Transverse colon (tissue), 4 donors: ENCODE measurements at regions of chr4 and their contacts with region 1.

Region 1: GRCh38 chr4:10033191-10033881 is 12.0 kb upstream of the SLC2A9 start:
- DNase-seq: no peak
- H3K4me3 ChIP-seq: no peak overlapping the region
- H3K27ac ChIP-seq: peak overlapping the region; percentile 56 to 72 (median 66)
- H3K4me1 ChIP-seq: peaks cover 5 to 21% (median 7%) of the 10 kb centered on the region in 4 donors
- H3K27me3 ChIP-seq: no peaks in the 10 kb centered on the region
- CTCF ChIP-seq: no peak
- EP300 ChIP-seq: no peak
- POLR2A ChIP-seq: no peak

Region 2: DNA sequence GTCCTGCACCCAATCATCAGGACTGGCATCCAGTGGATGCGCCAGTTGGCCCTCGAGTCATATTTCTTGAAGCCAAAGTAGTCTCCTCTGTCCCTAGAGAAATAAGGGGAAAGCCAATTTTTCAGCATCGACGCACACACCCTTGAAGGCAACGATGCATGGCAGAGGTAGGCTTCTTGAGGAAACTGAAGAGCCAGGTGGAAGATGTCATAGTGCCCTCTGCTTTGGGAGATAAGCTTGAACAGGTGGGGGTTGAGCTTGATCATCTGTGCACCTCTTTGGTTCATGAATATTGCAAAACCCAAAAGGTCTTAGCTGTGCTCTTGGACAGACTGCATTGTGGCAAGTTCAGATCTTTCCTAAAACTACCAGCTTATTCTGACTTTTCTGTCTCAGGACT is 117.8 kb after region 1 on chr4:
- in situ Hi-C with region 1: no loop called
- intact Hi-C with region 1: no loop called
- DNase-seq: no peak
- H3K4me3 ChIP-seq: no peak overlapping the region
- H3K27ac ChIP-seq: no peak overlapping the region
- H3K4me1 ChIP-seq: no peaks in the 10 kb centered on the region
- H3K27me3 ChIP-seq: no peaks in the 10 kb centered on the region
- CTCF ChIP-seq: no peak
- EP300 ChIP-seq: no peak
- POLR2A ChIP-seq: no peak

Region 3: GRCh38 chr4:10380735-10381134 is 347.4 kb after region 1 on chr4:
- in situ Hi-C with region 1: loop called in 1 of 4 experiments (anchors 25 kb)
- intact Hi-C with region 1: no loop called
- DNase-seq: no peak
- H3K4me3 ChIP-seq: no peak overlapping the region
- H3K27ac ChIP-seq: no peak overlapping the region
- H3K4me1 ChIP-seq: peaks cover 0 to 7% (median 0%) of the 10 kb centered on the region in 4 donors
- H3K27me3 ChIP-seq: no peaks in the 10 kb centered on the region
- CTCF ChIP-seq: no peak
- EP300 ChIP-seq: no peak
- POLR2A ChIP-seq: no peak